ENCODE measurements at regions of chr6 and their contacts with region 1.

Region 1: DNA sequence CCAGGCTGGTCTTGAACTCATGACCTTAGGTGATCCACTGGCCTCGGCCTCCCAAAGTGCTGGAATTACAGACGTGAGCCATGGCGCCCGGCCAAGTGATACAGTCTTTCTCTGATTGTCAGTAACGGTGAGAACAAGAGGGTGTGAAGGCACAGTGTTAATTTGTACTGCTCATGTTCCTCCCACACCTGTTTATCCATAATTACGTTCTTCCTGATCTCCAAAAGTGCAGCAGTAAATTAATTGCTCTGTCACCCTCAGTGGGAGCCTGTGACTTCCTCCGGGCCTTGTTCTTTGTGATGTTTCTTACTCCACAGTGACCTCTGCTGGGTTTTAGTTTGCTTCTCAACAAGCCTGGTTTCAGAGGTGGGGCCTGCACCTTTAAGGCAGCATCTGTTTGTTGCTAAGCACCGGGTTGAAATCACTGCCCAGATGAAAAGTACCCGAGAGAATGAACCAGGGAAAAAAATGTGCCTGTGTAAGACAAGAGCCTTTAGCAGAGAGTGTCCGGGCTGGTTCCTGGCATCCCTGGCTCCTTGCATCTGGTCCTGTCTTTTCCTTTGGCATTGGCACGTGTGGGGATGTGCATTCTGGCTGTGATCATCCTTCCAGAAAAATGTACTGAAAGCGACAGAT is 89.1 kb upstream of the CLDN20 start:
- DNase-seq: peak; percentile 63
- H3K4me3 Mint-ChIP-seq: no peak overlapping the region
- H3K27ac Mint-ChIP-seq: peak overlapping the region; percentile 82
- H3K4me1 Mint-ChIP-seq: peaks cover 41% of the 10 kb centered on the region
- H3K27me3 Mint-ChIP-seq: no peaks in the 10 kb centered on the region

Region 2: GRCh38 chr6:154733012-154733625 is 441.6 kb before region 1 on chr6 and contains the start of gene SCAF8:
- intact Hi-C with region 1: loop called (anchors 10 kb)
- DNase-seq: peak; percentile 83
- H3K4me3 Mint-ChIP-seq: peak within 1 kb of the TSS; percentile 91
- H3K27ac Mint-ChIP-seq: peak within 1 kb of the TSS; percentile 98
- H3K4me1 Mint-ChIP-seq: peaks cover 24% of the 10 kb centered on the region
- H3K27me3 Mint-ChIP-seq: no peaks in the 10 kb centered on the region
- total RNA-seq, gene SCAF8: 35.4 and 37.3 TPM in 2 replicates

Region 3: GRCh38 chr6:154995284-154996015 is 179.2 kb before region 1 on chr6 and contains the start of gene TIAM2:
- intact Hi-C with region 1: loop called (anchors 1 kb)
- DNase-seq: peak; percentile 18
- H3K4me3 Mint-ChIP-seq: peak within 1 kb of the TSS; percentile 71
- H3K27ac Mint-ChIP-seq: no peak within 1 kb of the TSS
- H3K4me1 Mint-ChIP-seq: peaks cover 16% of the 10 kb centered on the region
- H3K27me3 Mint-ChIP-seq: peaks cover 2% of the 10 kb centered on the region
- total RNA-seq, gene TIAM2: 41.4 and 46.0 TPM in 2 replicates

Region 4: DNA sequence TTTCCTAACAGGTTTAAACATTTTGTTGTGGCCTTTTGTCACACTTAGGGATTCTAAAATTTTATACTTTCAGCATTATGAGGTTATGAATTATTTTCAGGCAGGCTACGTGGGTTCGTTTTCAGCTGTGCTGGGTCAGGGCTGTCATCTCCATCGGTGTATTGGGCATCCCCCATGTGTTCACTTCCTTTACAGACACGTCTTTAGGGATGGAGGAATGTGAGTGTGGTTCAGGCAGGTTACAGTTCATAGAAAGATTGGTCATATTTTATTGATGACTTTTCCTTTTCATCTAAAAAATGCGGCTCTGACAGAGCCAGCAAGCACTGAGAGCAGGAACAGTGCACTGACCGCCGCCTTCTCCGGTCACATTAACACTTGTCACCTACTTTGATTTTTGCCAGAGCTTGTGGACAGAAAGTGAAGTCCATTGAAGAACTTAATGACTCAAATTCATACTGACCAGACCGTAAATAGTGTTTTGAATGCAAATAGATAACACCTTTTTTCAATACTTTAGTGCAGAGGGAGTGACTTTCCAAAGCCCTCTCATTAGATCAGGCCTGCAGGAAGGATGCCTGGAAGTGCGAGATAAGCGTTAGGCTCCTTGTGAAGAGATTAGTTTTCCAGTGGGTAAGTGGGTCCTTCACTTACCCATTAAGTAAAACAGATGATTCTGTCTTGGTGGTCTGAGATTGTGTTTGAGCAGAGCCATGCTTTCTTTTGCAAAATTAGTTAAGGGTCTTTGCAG is 66.4 kb before region 1 on chr6:
- intact Hi-C with region 1: loop called (anchors 1 kb)
- DNase-seq: no peak
- H3K4me3 Mint-ChIP-seq: peak overlapping the region; percentile 87
- H3K27ac Mint-ChIP-seq: peak overlapping the region; percentile 88
- H3K4me1 Mint-ChIP-seq: peaks cover 59% of the 10 kb centered on the region
- H3K27me3 Mint-ChIP-seq: no peaks in the 10 kb centered on the region

Region 5: DNA sequence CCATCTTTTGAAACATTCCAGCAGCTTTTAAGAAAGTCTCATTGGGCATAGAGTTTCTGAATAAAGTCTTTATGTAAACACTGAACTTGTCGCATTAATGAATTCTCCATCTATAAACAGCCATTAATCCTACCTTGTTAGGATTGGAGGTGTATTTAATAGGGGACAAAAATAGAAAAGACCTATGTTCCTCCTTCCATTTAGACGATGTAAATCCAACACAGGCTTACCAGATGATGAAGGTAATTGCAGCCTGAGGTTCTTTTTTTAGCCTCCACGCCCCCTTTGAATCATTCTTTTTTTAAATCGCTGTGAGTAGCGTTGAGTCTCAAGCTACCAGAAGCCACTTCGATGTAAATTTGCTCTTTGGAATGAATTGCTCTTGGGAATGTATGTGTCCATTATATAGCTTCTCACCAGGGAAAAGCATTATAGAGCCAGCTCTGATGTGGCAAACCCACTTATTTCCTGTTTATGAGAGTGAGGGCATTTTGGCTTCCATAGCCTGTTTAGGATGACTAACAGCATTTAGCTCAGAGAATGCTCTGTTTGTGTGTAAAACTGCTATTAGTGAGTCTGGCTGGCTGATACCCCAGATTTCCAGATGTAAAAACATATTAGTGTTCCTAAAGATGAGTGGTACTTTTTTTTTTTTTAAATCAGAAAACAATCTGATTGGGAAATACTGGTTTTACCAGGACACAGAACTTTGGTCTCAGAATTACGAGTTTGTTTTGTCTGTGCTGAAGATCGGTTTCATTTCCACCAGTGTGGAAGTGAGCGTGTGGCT is 14.2 kb after region 1 on chr6:
- intact Hi-C with region 1: loop called (anchors 1 kb)
- DNase-seq: no peak
- H3K4me3 Mint-ChIP-seq: peak overlapping the region; percentile 26
- H3K27ac Mint-ChIP-seq: peak overlapping the region; percentile 89
- H3K4me1 Mint-ChIP-seq: peaks cover 46% of the 10 kb centered on the region
- H3K27me3 Mint-ChIP-seq: no peaks in the 10 kb centered on the region

Region 6: DNA sequence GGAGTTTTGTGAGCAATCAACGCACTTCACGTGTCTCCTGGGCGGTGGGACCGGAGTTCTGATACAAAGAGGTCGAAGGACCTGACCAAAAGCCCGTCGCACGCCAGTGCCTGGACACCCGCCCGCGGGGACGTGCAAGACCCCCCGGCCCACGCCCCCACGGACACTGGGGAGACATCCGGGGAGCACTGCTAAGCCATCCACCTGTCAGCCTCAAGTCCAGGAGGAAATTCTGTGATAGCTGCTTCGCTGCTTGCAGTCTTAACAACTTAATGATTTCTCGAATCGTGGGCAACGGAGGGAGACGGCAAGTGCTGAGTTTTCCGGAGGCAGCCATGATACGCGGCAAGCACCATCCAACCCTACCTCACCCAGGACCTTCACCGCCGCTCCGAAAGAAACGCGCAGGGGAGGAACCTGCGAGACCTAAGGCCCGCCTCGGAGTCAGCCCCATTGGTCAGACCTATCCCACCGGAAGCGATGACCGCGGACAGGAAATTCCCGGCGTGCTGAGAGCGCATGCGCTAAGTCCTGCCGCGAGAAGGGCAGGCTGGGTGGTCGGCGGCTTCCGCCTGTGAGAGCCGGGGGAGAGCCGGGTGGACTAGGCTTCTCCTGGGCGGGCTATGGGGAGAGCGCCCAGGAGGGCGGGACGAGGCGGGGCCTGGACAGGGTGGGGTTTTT is 139.5 kb after region 1 on chr6 and contains the start of gene TFB1M:
- intact Hi-C with region 1: loop called (anchors 1 kb)
- DNase-seq: peak; percentile 99
- H3K4me3 Mint-ChIP-seq: peak within 1 kb of the TSS; percentile 96
- H3K27ac Mint-ChIP-seq: peak within 1 kb of the TSS; percentile 93
- H3K4me1 Mint-ChIP-seq: peaks cover 36% of the 10 kb centered on the region
- H3K27me3 Mint-ChIP-seq: no peaks in the 10 kb centered on the region
- total RNA-seq, gene TFB1M: 32.5 and 39.8 TPM in 2 replicates

Measured in activated T-helper 2 cell treated with anti-CD3 and anti-CD28 coated beads, Interferon-gamma antibody, Interleukin-2, Interleukin-4, amounts not matched to agents 10 μg/mL and 5 μg/mL and 100 μg/mL, durations not matched to agents 14 hours and 24 hours and 36 hours (primary cell).